Activated CD4-positive, alpha-beta T cell treated with anti-CD3 and anti-CD28 coated beads for 36 hours (primary cell): ENCODE measurements at regions of chr1 and their contacts with region 1.

Region 1: GRCh38 chr1:115062542-115063011 is 26.7 kb downstream of the TSPAN2 start:
- DNase-seq: peak; percentile 93
- ATAC-seq: peak; percentile 88
- H3K4me3 Mint-ChIP-seq: peak overlapping the region; percentile 23
- H3K27ac Mint-ChIP-seq: peak overlapping the region; percentile 75
- H3K4me1 Mint-ChIP-seq: peaks cover 40% of the 10 kb centered on the region
- H3K27me3 Mint-ChIP-seq: no peaks in the 10 kb centered on the region

Region 2: GRCh38 chr1:114263343-114263742 is 799.2 kb before region 1 on chr1:
- CTCF ChIA-PET with region 1: no interaction called
- POLR2A ChIA-PET with region 1: no interaction called
- intact Hi-C with region 1: no loop called
- DNase-seq: no peak
- ATAC-seq: peak; percentile 68
- H3K4me3 Mint-ChIP-seq: no peak overlapping the region
- H3K27ac Mint-ChIP-seq: no peak overlapping the region
- H3K4me1 Mint-ChIP-seq: no peaks in the 10 kb centered on the region
- H3K27me3 Mint-ChIP-seq: peaks cover 7% of the 10 kb centered on the region

Region 3: DNA sequence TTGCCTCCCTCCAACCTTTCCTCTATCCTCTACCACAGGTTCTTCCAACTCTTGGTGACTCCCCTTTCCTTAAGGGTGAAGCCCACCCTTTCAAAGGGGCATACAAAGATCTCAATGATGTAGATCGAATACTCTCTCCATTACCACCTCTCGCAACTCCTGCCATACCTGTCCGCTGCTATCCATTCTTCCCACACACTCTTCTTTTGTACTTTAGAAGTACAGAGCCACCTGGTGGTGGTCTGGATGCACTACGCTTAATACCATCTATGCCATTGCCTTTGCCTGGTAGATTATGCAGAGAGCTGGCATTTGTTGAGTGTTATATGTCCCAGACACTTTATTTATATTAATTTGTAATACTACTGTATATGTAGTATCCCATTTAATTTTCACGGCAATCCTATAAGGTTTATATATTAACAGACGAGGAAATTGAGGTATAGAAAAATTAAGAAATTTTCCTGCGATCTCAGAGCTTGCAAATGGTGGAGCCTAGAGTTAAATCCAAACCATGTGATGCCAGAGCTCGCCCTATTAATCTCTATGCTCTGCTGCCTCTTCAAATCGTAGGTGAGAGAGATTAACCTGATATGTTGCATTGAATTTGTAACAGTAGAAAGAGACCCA is 10.0 kb before region 1 on chr1:
- CTCF ChIA-PET with region 1: interaction called, 10 read pairs
- POLR2A ChIA-PET with region 1: no interaction called
- intact Hi-C with region 1: no loop called
- DNase-seq: peak; percentile 70
- ATAC-seq: peak; percentile 80
- H3K4me3 Mint-ChIP-seq: no peak overlapping the region
- H3K27ac Mint-ChIP-seq: no peak overlapping the region
- H3K4me1 Mint-ChIP-seq: peaks cover 3% of the 10 kb centered on the region
- H3K27me3 Mint-ChIP-seq: no peaks in the 10 kb centered on the region

Region 4: GRCh38 chr1:115089420-115090185 is 27.0 kb after region 1 on chr1 and contains the start of gene TSPAN2:
- CTCF ChIA-PET with region 1: interaction called, 3 read pairs
- POLR2A ChIA-PET with region 1: no interaction called
- intact Hi-C with region 1: loop called in 1 of 2 experiments (anchors 1 kb)
- DNase-seq: peak; percentile 65
- ATAC-seq: peak; percentile 80
- H3K4me3 Mint-ChIP-seq: peak within 1 kb of the TSS; percentile 70
- H3K27ac Mint-ChIP-seq: peak within 1 kb of the TSS; percentile 1
- H3K4me1 Mint-ChIP-seq: peaks cover 32% of the 10 kb centered on the region
- H3K27me3 Mint-ChIP-seq: peaks cover 3% of the 10 kb centered on the region
- total RNA-seq, gene TSPAN2: 0.69 to 0.91 TPM

Region 5: GRCh38 chr1:115098979-115099692 is 36.6 kb after region 1 on chr1:
- CTCF ChIA-PET with region 1: interaction called, 3 read pairs
- POLR2A ChIA-PET with region 1: no interaction called
- intact Hi-C with region 1: loop called (anchors 1 kb)
- DNase-seq: peak; percentile 80
- ATAC-seq: peak; percentile 80
- H3K4me3 Mint-ChIP-seq: peak overlapping the region; percentile 75
- H3K27ac Mint-ChIP-seq: peak overlapping the region; percentile 69
- H3K4me1 Mint-ChIP-seq: peaks cover 39% of the 10 kb centered on the region
- H3K27me3 Mint-ChIP-seq: no peaks in the 10 kb centered on the region

Region 6: GRCh38 chr1:115133440-115133839 is 70.9 kb after region 1 on chr1:
- CTCF ChIA-PET with region 1: no interaction called
- POLR2A ChIA-PET with region 1: no interaction called
- intact Hi-C with region 1: no loop called
- DNase-seq: no peak
- ATAC-seq: no peak
- H3K4me3 Mint-ChIP-seq: no peak overlapping the region
- H3K27ac Mint-ChIP-seq: no peak overlapping the region
- H3K4me1 Mint-ChIP-seq: no peaks in the 10 kb centered on the region
- H3K27me3 Mint-ChIP-seq: peaks cover 4% of the 10 kb centered on the region